Kidney (tissue), 22 donors: ENCODE measurements at regions of chr7 and their contacts with region 1.

Region 1: GRCh38 chr7:155598810-155599210 is 45.7 kb upstream of the RBM33 start:
- DNase-seq: peak; percentile 78 to 88 (median 80)
- H3K4me3 ChIP-seq: peak overlapping the region in 2 of 3 donors; percentile 25 to 33
- H3K27ac ChIP-seq: no peak overlapping the region
- H3K4me1 ChIP-seq: peaks cover 0 to 3% (median 0%) of the 10 kb centered on the region in 3 donors
- H3K27me3 ChIP-seq: no peaks in the 10 kb centered on the region
- CTCF ChIP-seq: peak; percentile 98

Region 2: DNA sequence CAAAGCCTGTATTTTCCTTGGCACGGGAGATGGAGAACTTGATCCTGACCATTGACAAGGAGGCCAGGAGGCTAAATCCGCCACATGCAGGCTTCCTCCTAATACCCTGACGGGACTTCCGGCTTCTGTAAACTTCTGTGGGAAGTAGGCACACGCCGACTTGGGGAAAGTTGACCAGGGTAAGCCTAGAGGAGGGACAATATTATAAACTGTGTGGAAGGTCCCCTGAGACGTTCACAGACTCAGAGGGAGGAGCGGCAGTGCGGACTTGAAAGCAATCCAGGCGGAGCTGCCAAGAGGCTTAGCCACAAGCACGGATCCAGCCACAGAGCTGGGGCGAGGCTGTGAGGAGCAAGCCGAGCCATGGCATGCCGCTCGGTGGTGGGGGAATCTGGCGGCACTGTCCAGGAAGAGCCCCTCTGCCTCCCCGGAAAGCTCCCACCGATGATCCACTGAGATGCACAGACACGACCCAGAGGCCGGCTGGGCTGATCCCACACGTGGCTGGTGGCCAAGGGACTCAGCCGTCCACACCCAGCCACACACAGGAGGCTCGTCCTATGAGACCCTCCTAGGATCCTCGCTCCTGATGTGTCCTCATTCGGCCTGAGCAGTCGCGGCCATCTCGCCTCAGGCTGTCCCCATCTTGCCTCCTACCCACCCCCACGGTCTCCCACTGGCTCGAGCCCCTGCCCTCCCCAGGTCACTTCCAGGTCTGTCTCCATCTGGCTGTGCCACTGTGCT is 341.2 kb before region 1 on chr7:
- intact Hi-C with region 1: no loop called
- DNase-seq: peak in 4 of 5 donors; percentile 31 to 92 (median 60)
- H3K4me3 ChIP-seq: no peak overlapping the region
- H3K27ac ChIP-seq: peak overlapping the region; percentile 63 to 77
- H3K4me1 ChIP-seq: peaks cover 0 to 8% (median 7%) of the 10 kb centered on the region in 3 donors
- H3K27me3 ChIP-seq: no peaks in the 10 kb centered on the region
- CTCF ChIP-seq: no peak

Region 3: GRCh38 chr7:155769701-155770100 is 170.9 kb after region 1 on chr7:
- intact Hi-C with region 1: loop called (anchors 10 kb)
- DNase-seq: peak in 2 of 5 donors; percentile 23 to 62
- H3K4me3 ChIP-seq: no peak overlapping the region
- H3K27ac ChIP-seq: no peak overlapping the region
- H3K4me1 ChIP-seq: no peaks in the 10 kb centered on the region
- H3K27me3 ChIP-seq: no peaks in the 10 kb centered on the region
- CTCF ChIP-seq: no peak